ENCODE measurements at regions of chr3 and their contacts with region 1.

Region 1: DNA sequence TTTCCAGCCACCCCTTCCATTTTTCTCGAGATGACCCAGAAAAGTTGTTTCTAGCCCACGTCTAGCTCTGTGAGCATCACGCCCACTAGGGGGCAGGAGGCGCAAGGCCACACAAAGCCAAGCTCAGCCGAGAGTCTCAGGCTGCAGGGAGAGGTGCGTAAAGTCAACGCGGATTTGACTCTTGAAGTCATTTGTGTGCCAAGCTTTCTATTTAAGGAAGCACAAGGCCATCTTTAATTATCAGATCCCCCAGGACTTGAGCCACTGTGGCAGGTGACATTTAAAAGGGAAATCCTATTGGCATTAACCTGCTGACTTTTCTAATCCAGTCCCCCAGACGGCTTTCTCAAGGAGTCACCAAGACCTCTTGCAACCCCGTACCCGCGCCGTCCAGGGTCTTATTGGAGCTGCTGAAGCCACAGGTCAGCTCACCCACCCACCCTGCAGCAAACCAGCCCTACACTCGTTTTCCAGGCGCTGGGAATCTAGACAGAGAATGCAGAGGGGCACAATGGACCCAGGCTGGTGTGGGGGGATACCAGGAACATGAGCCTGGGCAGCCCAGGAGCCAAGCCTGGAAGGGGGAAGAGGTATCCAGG is 62.1 kb downstream of the CAPN7 start:
- DNase-seq: peak; percentile 86 to 91 (median 88)
- ATAC-seq: peak; percentile 91
- H3K4me3 ChIP-seq: no peak overlapping the region
- H3K27ac ChIP-seq: no peak overlapping the region
- H3K4me1 ChIP-seq: peaks cover 10% of the 10 kb centered on the region
- H3K27me3 ChIP-seq: no peaks in the 10 kb centered on the region
- CTCF ChIP-seq: peak; percentile 84 to 97 (median 94)
- POLR2A ChIP-seq: no peak

Region 2: GRCh38 chr3:15332405-15333098 is 64.4 kb after region 1 on chr3 and contains the start of gene SH3BP5:
- intact Hi-C with region 1: loop called (anchors 10 kb)
- DNase-seq: peak; percentile 65 to 74 (median 72)
- ATAC-seq: peak; percentile 91
- H3K4me3 ChIP-seq: peak within 1 kb of the TSS; percentile 33 to 72
- H3K27ac ChIP-seq: peak within 1 kb of the TSS in 3 of 4 donors; percentile 45 to 54 (median 51)
- H3K4me1 ChIP-seq: peaks cover 12% of the 10 kb centered on the region
- H3K27me3 ChIP-seq: no peaks in the 10 kb centered on the region
- CTCF ChIP-seq: peak; percentile 60 to 85 (median 70)
- POLR2A ChIP-seq: peak in 2 of 3 donors; percentile 19 to 22
- total RNA-seq, gene SH3BP5: 13.7 to 21.8 TPM

Region 3: GRCh38 chr3:15384510-15385237 is 116.5 kb after region 1 on chr3:
- intact Hi-C with region 1: loop called (anchors 5 kb)
- DNase-seq: no peak
- ATAC-seq: no peak
- H3K4me3 ChIP-seq: no peak overlapping the region
- H3K27ac ChIP-seq: no peak overlapping the region
- H3K4me1 ChIP-seq: no peaks in the 10 kb centered on the region
- H3K27me3 ChIP-seq: no peaks in the 10 kb centered on the region
- CTCF ChIP-seq: no peak
- POLR2A ChIP-seq: no peak

Region 4: DNA sequence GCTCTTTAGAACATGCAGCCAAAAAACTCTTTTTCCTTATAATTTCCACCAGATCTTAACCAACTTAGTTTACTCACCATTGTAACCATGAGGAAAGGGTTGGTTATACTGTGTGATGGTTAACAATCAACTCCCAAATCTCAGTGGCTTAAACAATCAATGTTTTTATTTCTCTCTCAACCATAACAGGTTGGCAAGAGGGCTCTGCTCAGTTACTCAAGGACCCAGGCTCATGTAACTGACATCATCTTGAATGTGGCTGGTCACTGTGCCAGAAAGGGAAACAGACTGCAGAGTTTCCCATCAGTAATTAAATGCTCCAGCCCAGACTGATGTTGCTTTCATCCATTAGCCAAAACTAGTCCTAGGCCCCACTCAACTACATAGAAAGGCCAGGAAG is 460.6 kb after region 1 on chr3:
- intact Hi-C with region 1: no loop called
- DNase-seq: no peak
- ATAC-seq: no peak
- H3K4me3 ChIP-seq: no peak overlapping the region
- H3K27ac ChIP-seq: no peak overlapping the region
- H3K4me1 ChIP-seq: no peaks in the 10 kb centered on the region
- H3K27me3 ChIP-seq: no peaks in the 10 kb centered on the region
- CTCF ChIP-seq: no peak
- POLR2A ChIP-seq: no peak

Measured in body of pancreas (tissue), 4 donors.